Natural killer cell (primary cell): ENCODE measurements at regions of chr7 and their contacts with region 1.

Region 1: DNA sequence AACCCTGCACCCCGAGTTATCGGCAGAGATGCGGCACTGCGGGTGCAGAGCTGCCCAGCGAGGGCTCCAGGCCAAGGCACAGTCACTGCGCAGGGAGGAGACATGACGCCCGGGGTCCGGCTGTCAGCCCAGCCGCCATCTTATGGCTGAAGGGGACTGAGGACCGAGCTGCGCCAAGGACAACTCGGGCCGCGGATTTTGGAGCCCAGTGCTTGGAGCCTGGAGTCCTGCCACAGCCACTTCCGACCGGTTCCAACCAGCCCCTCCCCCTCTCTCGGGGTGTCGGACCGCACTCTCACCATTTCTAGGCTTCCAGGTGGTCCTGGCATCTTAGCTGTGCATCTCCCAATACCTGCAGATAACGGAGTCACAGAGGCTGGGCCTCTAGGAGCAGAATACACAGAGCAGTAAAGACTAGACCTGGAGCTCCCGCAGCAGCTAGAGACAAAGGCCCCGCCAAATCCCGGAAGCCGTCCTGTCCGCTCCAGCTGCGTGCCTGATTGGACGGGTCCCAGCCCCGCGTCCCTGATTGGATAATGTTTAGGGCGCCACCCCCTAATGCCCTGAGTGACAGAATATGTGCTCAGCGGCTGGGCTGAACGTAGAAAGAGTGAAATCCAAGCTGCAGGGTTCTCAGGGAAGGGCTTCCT is at the start of gene ZNF680:
- DNase-seq: peak; percentile 88 to 91
- ATAC-seq: peak; percentile 98 to 99 (median 99)
- H3K4me3 ChIP-seq: peak within 1 kb of the TSS; percentile 86
- H3K4me3 Mint-ChIP-seq: peak within 1 kb of the TSS; percentile 100
- H3K27ac ChIP-seq: peak within 1 kb of the TSS; percentile 69
- H3K27ac Mint-ChIP-seq: peak within 1 kb of the TSS; percentile 94 to 97
- H3K4me1 ChIP-seq: peaks cover 7% of the 10 kb centered on the region
- H3K4me1 Mint-ChIP-seq: peaks cover 31 to 41% of the 10 kb centered on the region in 2 donors
- H3K27me3 ChIP-seq: no peaks in the 10 kb centered on the region
- H3K27me3 Mint-ChIP-seq: no peaks in the 10 kb centered on the region
- CTCF ChIP-seq: no peak
- total RNA-seq, gene ZNF680: 8.9 to 17.9 (median 10.2) TPM

Region 2: GRCh38 chr7:64307254-64308015 is 255.3 kb before region 1 on chr7:
- intact Hi-C with region 1: loop called (anchors 2 kb)
- DNase-seq: peak; percentile 82 to 96
- ATAC-seq: peak; percentile 96 to 100 (median 98)
- H3K4me3 ChIP-seq: peak overlapping the region; percentile 68
- H3K4me3 Mint-ChIP-seq: peak overlapping the region; percentile 100
- H3K27ac ChIP-seq: peak overlapping the region; percentile 85
- H3K27ac Mint-ChIP-seq: peak overlapping the region; percentile 96 to 97
- H3K4me1 ChIP-seq: peaks cover 21% of the 10 kb centered on the region
- H3K4me1 Mint-ChIP-seq: peaks cover 15 to 21% of the 10 kb centered on the region in 2 donors
- H3K27me3 ChIP-seq: no peaks in the 10 kb centered on the region
- H3K27me3 Mint-ChIP-seq: no peaks in the 10 kb centered on the region
- CTCF ChIP-seq: peak; percentile 19

Region 3: DNA sequence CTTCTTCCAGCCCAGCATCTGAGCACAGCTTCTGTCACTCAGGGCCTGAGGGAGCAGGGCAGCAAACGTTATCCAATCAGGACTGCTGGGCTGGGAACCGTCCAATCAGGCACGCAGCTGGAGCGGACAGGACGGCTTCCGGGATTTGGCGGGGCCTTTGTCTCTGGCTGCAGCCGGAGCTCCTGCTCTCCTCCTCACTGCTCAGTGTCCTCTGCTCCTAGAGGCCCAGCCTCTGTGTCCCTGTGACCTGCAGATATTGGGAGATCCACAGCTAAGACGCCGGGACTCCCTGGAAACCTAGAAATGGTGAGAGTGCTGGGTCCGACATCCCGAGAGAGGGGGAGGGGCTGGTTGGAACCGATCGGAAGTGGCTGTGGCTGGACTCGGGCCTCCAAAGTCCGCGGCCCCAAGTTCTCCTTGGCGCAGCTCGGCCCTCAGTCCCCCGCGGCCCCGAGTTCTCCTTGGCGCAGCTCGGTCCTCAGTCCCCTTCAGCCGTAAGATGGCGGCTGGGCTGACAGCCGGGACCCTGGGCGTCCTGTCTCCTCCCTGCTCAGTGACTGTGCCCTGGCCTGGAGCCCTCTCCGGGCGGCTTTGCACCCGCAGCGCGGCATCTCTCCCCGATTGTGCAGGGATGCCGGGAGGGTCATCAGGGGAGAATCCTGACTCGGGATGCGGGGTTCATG is 103.4 kb after region 1 on chr7 and contains the start of gene ZNF107:
- intact Hi-C with region 1: loop called (anchors 2 kb)
- DNase-seq: peak; percentile 81 to 92
- ATAC-seq: peak; percentile 97 to 100 (median 98)
- H3K4me3 ChIP-seq: peak within 1 kb of the TSS; percentile 95
- H3K4me3 Mint-ChIP-seq: peak within 1 kb of the TSS; percentile 97
- H3K27ac ChIP-seq: peak within 1 kb of the TSS; percentile 93
- H3K27ac Mint-ChIP-seq: peak within 1 kb of the TSS; percentile 90 to 93
- H3K4me1 ChIP-seq: peaks cover 13% of the 10 kb centered on the region
- H3K4me1 Mint-ChIP-seq: peaks cover 30 to 44% of the 10 kb centered on the region in 2 donors
- H3K27me3 ChIP-seq: no peaks in the 10 kb centered on the region
- H3K27me3 Mint-ChIP-seq: no peaks in the 10 kb centered on the region
- CTCF ChIP-seq: no peak
- total RNA-seq, gene ZNF107: 10.3 to 13.3 (median 10.4) TPM

Region 4: GRCh38 chr7:64733550-64734219 is 170.9 kb after region 1 on chr7:
- intact Hi-C with region 1: no loop called
- DNase-seq: no peak
- ATAC-seq: no peak
- H3K4me3 ChIP-seq: no peak overlapping the region
- H3K4me3 Mint-ChIP-seq: no peak overlapping the region
- H3K27ac ChIP-seq: no peak overlapping the region
- H3K27ac Mint-ChIP-seq: no peak overlapping the region
- H3K4me1 ChIP-seq: no peaks in the 10 kb centered on the region
- H3K4me1 Mint-ChIP-seq: no peaks in the 10 kb centered on the region
- H3K27me3 ChIP-seq: no peaks in the 10 kb centered on the region
- H3K27me3 Mint-ChIP-seq: no peaks in the 10 kb centered on the region
- CTCF ChIP-seq: no peak

Region 5: DNA sequence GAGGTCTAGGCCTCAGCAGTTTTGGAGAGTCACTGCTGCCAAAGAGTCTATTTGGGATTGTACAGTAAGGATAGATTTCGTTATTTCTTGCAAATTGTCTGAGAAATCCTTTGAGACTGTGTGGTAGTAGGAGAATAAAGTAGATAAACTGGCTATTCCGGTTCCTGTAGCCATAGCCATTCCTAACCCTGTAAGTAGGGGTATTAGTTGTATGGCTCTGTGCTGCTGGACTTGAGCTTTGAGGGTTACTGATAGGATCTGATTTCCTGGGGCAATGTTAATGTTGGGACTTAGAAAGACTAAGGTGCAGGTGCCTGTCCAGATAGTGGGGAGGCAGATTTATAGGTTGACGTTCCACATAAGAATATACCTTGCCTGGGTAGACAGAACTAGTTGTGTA is 195.4 kb after region 1 on chr7:
- intact Hi-C with region 1: no loop called
- DNase-seq: no peak
- ATAC-seq: no peak
- H3K4me3 ChIP-seq: no peak overlapping the region
- H3K4me3 Mint-ChIP-seq: no peak overlapping the region
- H3K27ac ChIP-seq: no peak overlapping the region
- H3K27ac Mint-ChIP-seq: no peak overlapping the region
- H3K4me1 ChIP-seq: no peaks in the 10 kb centered on the region
- H3K4me1 Mint-ChIP-seq: no peaks in the 10 kb centered on the region
- H3K27me3 ChIP-seq: no peaks in the 10 kb centered on the region
- H3K27me3 Mint-ChIP-seq: no peaks in the 10 kb centered on the region
- CTCF ChIP-seq: no peak